B cell (primary cell): ENCODE measurements at regions of chr3 and their contacts with region 1.

Region 1: DNA sequence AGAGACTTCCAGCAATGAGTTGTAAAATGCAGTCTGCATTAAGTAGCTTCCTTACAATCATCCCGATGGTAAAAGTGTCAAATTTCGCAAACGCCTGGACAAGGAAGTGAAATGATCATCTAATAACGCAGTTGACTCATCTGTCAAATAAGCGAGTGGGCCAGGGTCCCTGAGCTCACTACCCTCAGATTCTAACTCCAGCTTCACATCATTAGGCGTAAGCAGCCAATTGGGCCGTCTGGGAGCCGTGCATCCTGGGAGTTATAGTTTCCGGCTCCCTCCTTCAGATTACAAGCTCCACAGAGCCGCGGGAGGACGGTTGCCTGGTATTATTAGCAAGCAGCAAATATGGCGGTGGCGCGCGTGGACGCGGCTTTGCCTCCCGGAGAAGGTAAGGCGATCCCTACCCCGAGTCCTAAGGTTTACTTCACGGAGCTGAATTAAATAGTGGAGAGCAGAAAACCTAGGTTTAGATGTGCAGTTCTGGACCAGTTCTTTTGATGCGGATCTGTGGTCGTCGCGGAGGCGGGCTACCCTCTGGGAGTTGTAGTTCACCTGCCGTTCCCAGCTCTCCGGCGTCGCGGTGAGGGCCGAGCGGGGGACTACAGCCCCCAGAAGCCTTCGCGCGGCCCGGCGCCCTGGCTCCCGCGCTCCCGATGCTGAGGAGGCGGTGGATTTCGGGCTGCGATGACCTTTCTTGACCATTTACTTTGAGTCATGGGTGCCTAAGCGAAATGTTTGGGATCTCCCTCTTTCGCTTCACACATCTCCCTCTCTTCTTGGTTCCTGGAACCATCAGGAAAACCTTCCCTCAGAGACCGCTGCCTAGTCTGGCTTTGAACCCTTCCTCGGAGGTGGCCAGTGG is at the start of gene CEP97:
- DNase-seq: peak; percentile 91
- ATAC-seq: peak; percentile 93
- H3K4me3 ChIP-seq: peak within 1 kb of the TSS; percentile 77 to 99 (median 84)
- H3K4me3 Mint-ChIP-seq: peak within 1 kb of the TSS; percentile 100
- H3K27ac ChIP-seq: peak within 1 kb of the TSS; percentile 70 to 74
- H3K27ac Mint-ChIP-seq: peak within 1 kb of the TSS; percentile 99
- H3K4me1 ChIP-seq: peaks cover 30 to 34% of the 10 kb centered on the region in 2 donors
- H3K4me1 Mint-ChIP-seq: peaks cover 37% of the 10 kb centered on the region
- H3K27me3 ChIP-seq: no peaks in the 10 kb centered on the region
- H3K27me3 Mint-ChIP-seq: no peaks in the 10 kb centered on the region
- CTCF ChIP-seq: no peak
- total RNA-seq, gene CEP97: 15.0 and 15.4 TPM in 2 replicates

Region 2: GRCh38 chr3:101561630-101562328 is 162.8 kb before region 1 on chr3 and contains the start of gene TRMT10C:
- CTCF ChIA-PET with region 1: no interaction called
- POLR2A ChIA-PET with region 1: no interaction called
- intact Hi-C with region 1: loop called (anchors 1 kb)
- DNase-seq: peak; percentile 96
- ATAC-seq: peak; percentile 94
- H3K4me3 ChIP-seq: peak within 1 kb of the TSS; percentile 86 to 96 (median 92)
- H3K4me3 Mint-ChIP-seq: peak within 1 kb of the TSS; percentile 98
- H3K27ac ChIP-seq: peak within 1 kb of the TSS; percentile 83 to 84
- H3K27ac Mint-ChIP-seq: peak within 1 kb of the TSS; percentile 94
- H3K4me1 ChIP-seq: peaks cover 23% of the 10 kb centered on the region in 2 donors
- H3K4me1 Mint-ChIP-seq: peaks cover 36% of the 10 kb centered on the region
- H3K27me3 ChIP-seq: peaks cover 0 to 25% (median 4%) of the 10 kb centered on the region in 4 experiments
- H3K27me3 Mint-ChIP-seq: peaks cover 7% of the 10 kb centered on the region
- CTCF ChIP-seq: no peak
- total RNA-seq, gene TRMT10C: 25.2 and 25.3 TPM in 2 replicates

Region 3: DNA sequence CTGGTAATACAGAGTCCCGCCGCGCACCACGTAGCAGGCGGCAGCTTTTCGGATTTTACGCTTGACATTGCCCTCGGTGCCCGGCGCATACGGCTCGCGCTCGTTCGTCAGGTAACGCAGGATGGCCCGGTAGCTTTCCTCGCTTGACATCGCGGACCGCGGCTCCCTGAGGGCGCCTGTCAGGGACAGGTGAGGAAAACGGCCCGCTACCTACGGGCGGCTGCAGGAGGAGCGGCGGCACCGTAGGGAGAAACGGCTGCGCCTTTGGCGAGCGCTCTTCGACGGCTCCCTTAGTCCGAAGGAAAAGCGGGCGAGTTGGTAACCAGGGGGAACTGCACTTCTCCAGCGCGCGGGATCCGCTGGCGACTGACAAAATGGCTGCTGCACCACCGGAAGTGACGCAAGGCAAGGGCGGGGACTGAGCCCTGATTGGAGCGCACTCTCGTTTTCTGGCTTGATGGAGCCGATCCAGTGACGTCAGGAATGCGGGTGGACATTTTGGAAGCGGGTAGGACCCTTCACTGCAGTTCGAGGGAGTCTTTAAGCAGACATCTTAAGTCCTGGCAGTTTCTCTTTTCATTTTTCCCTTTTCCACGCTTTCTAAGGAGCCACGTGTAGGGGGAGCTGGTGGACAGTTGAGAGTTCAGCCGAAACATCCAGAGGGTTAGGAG is 47.7 kb before region 1 on chr3 and contains the start of gene ZBTB11:
- CTCF ChIA-PET with region 1: interaction called, 4 read pairs
- POLR2A ChIA-PET with region 1: interaction called, 9 read pairs
- intact Hi-C with region 1: loop called (anchors 1 kb)
- DNase-seq: peak; percentile 99
- ATAC-seq: peak; percentile 65
- H3K4me3 ChIP-seq: peak within 1 kb of the TSS; percentile 73 to 99 (median 94)
- H3K4me3 Mint-ChIP-seq: peak within 1 kb of the TSS; percentile 94
- H3K27ac ChIP-seq: peak within 1 kb of the TSS; percentile 96 to 98
- H3K27ac Mint-ChIP-seq: peak within 1 kb of the TSS; percentile 97
- H3K4me1 ChIP-seq: peaks cover 17 to 21% of the 10 kb centered on the region in 2 donors
- H3K4me1 Mint-ChIP-seq: peaks cover 40% of the 10 kb centered on the region
- H3K27me3 ChIP-seq: no peaks in the 10 kb centered on the region
- H3K27me3 Mint-ChIP-seq: no peaks in the 10 kb centered on the region
- CTCF ChIP-seq: no peak
- total RNA-seq, gene ZBTB11: 40.7 and 42.6 TPM in 2 replicates

Region 4: GRCh38 chr3:101685870-101686412 is 38.6 kb before region 1 on chr3:
- CTCF ChIA-PET with region 1: interaction called, 4 read pairs
- POLR2A ChIA-PET with region 1: interaction called, 11 read pairs
- intact Hi-C with region 1: loop called (anchors 1 kb)
- DNase-seq: no peak
- ATAC-seq: peak; percentile 6
- H3K4me3 ChIP-seq: peak overlapping the region; percentile 64 to 98 (median 84)
- H3K4me3 Mint-ChIP-seq: peak overlapping the region; percentile 100
- H3K27ac ChIP-seq: peak overlapping the region; percentile 89 to 90
- H3K27ac Mint-ChIP-seq: peak overlapping the region; percentile 99
- H3K4me1 ChIP-seq: peaks cover 22 to 32% of the 10 kb centered on the region in 2 donors
- H3K4me1 Mint-ChIP-seq: peaks cover 32% of the 10 kb centered on the region
- H3K27me3 ChIP-seq: no peaks in the 10 kb centered on the region
- H3K27me3 Mint-ChIP-seq: no peaks in the 10 kb centered on the region
- CTCF ChIP-seq: peak; percentile 12

Region 5: DNA sequence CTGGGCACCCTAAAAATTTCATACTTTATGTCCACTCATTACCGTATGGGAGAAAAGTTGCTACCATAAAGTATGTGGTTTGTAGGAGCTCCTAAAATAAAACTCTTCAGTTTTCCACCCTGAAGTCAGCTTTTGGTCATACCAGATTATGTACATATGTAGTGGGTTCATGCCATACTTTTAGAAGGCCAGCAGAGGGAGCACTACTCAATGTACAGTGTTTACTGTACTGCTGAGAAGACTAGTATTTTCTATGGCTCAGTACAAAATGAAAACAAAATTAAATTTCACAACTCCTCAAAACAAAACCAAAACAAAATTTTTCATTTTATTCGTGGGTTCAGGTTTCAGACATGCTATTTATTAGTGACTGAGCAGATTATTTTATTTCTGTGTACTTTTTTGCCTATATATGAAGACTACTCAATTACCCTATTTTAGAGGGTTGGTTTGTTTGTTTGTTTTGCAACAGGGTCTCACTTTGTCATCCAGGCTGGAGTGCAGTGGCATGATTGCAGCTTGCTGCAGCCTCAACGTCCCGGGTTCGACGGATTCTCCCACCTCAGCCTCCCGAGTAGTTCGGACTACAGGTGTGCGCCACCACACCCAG is 78.7 kb after region 1 on chr3:
- CTCF ChIA-PET with region 1: interaction called, 7 read pairs
- POLR2A ChIA-PET with region 1: no interaction called
- intact Hi-C with region 1: loop called (anchors 1 kb)
- DNase-seq: peak; percentile 75
- ATAC-seq: peak; percentile 99
- H3K4me3 ChIP-seq: no peak overlapping the region
- H3K4me3 Mint-ChIP-seq: no peak overlapping the region
- H3K27ac ChIP-seq: no peak overlapping the region
- H3K27ac Mint-ChIP-seq: no peak overlapping the region
- H3K4me1 ChIP-seq: no peaks in the 10 kb centered on the region
- H3K4me1 Mint-ChIP-seq: peaks cover 4% of the 10 kb centered on the region
- H3K27me3 ChIP-seq: no peaks in the 10 kb centered on the region
- H3K27me3 Mint-ChIP-seq: no peaks in the 10 kb centered on the region
- CTCF ChIP-seq: peak; percentile 90

Region 6: DNA sequence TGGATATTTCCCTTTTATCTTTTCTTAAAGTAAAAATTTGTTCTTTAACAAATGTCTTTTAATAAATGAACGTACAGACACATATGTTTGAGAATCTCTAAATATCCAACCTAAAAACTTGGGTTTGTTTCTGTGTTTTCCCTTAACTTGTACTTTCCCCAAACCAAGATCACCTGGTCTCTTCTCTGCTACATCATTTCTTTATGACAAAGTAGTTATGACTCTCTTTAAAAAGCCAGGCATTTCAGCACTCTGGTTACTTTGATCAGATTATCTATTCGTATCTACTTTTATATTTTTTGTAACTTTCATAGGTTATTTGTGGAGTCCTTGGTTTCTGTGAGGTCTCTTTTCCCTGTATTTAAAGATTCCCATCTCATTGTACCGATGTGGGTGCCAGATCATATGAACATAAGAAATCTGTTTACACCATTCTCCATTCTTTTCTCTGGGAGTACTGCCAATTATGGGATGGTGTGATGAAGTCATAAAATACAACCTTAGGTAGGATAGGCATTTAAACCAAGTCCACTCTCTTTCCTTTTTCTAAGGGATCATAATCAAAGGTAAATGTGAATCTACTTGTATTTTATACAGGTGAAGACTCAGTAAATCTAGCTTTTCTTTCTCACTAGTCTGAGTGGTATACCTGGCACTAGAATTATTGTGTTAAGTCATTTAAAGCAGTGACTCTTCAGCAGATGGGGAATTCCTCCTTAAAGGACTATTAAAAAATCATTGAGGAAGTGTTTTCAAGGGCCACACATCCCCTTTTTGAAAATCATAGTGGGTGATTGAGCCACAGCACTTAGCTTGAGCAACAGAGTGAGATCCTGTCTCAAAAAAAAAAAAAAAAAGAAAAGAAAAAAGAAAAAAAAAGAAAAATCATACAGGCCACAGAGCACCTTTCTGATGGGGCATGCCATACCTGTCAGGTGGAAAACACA is 112.4 kb after region 1 on chr3:
- CTCF ChIA-PET with region 1: no interaction called
- POLR2A ChIA-PET with region 1: no interaction called
- intact Hi-C with region 1: no loop called
- DNase-seq: peak; percentile 77
- ATAC-seq: peak; percentile 68
- H3K4me3 ChIP-seq: peak overlapping the region in 2 of 5 experiments; percentile 2 to 14
- H3K4me3 Mint-ChIP-seq: peak overlapping the region; percentile 73
- H3K27ac ChIP-seq: peak overlapping the region; percentile 19 to 49
- H3K27ac Mint-ChIP-seq: peak overlapping the region; percentile 28
- H3K4me1 ChIP-seq: peaks cover 55 to 59% of the 10 kb centered on the region in 2 donors
- H3K4me1 Mint-ChIP-seq: peaks cover 84% of the 10 kb centered on the region
- H3K27me3 ChIP-seq: no peaks in the 10 kb centered on the region
- H3K27me3 Mint-ChIP-seq: no peaks in the 10 kb centered on the region
- CTCF ChIP-seq: no peak